Activated CD4-positive, alpha-beta memory T cell treated with anti-CD3 and anti-CD28 coated beads, Interleukin-2, amount 10 ng/mL, durations not matched to agents 7 days and 5 days (primary cell): ENCODE measurements at regions of chr16 and their contacts with region 1.

Region 1: GRCh38 chr16:46973207-46973995 is at the start of gene DNAJA2:
- DNase-seq: peak; percentile 91
- H3K4me3 Mint-ChIP-seq: peak within 1 kb of the TSS; percentile 91
- H3K27ac Mint-ChIP-seq: peak within 1 kb of the TSS; percentile 95
- H3K4me1 Mint-ChIP-seq: peaks cover 55% of the 10 kb centered on the region
- H3K27me3 Mint-ChIP-seq: no peaks in the 10 kb centered on the region
- total RNA-seq, gene DNAJA2: 61.2 to 64.3 TPM

Region 2: GRCh38 chr16:46830902-46831647 is 142.3 kb before region 1 on chr16 and contains the start of gene C16orf87:
- CTCF ChIA-PET with region 1: no interaction called
- POLR2A ChIA-PET with region 1: interaction called, 18 read pairs
- DNase-seq: peak; percentile 93
- H3K4me3 Mint-ChIP-seq: peak within 1 kb of the TSS; percentile 98
- H3K27ac Mint-ChIP-seq: peak within 1 kb of the TSS; percentile 93
- H3K4me1 Mint-ChIP-seq: peaks cover 38% of the 10 kb centered on the region
- H3K27me3 Mint-ChIP-seq: peaks cover 7% of the 10 kb centered on the region
- total RNA-seq, gene C16orf87: 18.0 to 19.6 TPM

Region 3: GRCh38 chr16:46961373-46962353 is 11.7 kb before region 1 on chr16:
- CTCF ChIA-PET with region 1: interaction called, 3 read pairs
- POLR2A ChIA-PET with region 1: interaction called, 45 read pairs
- DNase-seq: peak; percentile 37
- H3K4me3 Mint-ChIP-seq: no peak overlapping the region
- H3K27ac Mint-ChIP-seq: peak overlapping the region; percentile 58
- H3K4me1 Mint-ChIP-seq: peaks cover 24% of the 10 kb centered on the region
- H3K27me3 Mint-ChIP-seq: no peaks in the 10 kb centered on the region

Region 4: DNA sequence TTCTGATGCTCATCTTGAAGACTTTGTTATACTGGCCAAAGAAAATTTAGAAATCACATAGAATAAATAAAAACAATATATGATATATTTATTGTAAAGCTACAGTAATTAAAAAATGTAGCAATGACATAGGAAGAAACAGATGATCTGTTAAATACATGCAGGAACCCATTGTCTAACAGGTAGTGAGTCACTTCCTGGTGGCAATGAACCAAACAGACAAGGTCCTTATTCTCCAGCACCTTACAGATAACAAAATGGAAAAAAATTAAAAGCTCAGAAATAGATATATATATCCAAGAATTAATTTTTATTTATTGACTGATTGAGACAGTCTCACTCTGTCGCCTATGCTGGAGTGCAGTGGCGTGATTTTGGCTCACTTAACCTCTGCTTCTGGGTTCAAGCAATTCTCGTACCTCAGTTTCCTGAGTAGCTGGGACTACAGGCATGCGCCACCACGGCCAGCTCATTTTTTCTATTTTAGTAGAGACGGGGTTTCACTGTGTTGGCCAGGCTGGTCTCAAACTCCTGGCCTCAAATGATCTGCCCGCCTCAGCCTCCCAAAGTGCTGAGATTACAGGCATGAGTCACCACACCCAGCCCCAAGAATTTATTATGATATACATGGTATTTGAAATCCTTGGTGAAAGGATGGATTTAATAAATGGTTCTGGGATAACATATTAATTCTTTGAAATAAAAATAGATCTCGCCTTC is 162.9 kb after region 1 on chr16:
- CTCF ChIA-PET with region 1: interaction called, 45 read pairs
- POLR2A ChIA-PET with region 1: interaction called, 29 read pairs
- DNase-seq: peak; percentile 47
- H3K4me3 Mint-ChIP-seq: peak overlapping the region; percentile 40
- H3K27ac Mint-ChIP-seq: peak overlapping the region; percentile 86
- H3K4me1 Mint-ChIP-seq: peaks cover 66% of the 10 kb centered on the region
- H3K27me3 Mint-ChIP-seq: no peaks in the 10 kb centered on the region